Adrenal gland (tissue), 19 donors: ENCODE measurements at regions of chr11 and their contacts with region 1.

Region 1: GRCh38 chr11:65491614-65492386 is 7.0 kb upstream of the MALAT1 start:
- DNase-seq: peak; percentile 87 to 97 (median 94)
- H3K4me3 ChIP-seq: no peak overlapping the region
- H3K27ac ChIP-seq: peak overlapping the region; percentile 95 to 100 (median 99)
- H3K4me1 ChIP-seq: peaks cover 96 to 97% of the 10 kb centered on the region in 2 donors
- H3K27me3 ChIP-seq: no peaks in the 10 kb centered on the region
- CTCF ChIP-seq: no peak
- POLR2A ChIP-seq: peak; percentile 34 to 85

Region 2: GRCh38 chr11:65506770-65507505 is 15.1 kb after region 1 on chr11:
- intact Hi-C with region 1: loop called in 1 of 2 experiments (anchors 2 kb)
- DNase-seq: peak; percentile 78 to 88 (median 85)
- H3K4me3 ChIP-seq: peak overlapping the region in 1 of 4 donors; percentile 88
- H3K27ac ChIP-seq: peak overlapping the region; percentile 88 to 99 (median 97)
- H3K4me1 ChIP-seq: peaks cover 12 to 20% of the 10 kb centered on the region in 2 donors
- H3K27me3 ChIP-seq: no peaks in the 10 kb centered on the region
- CTCF ChIP-seq: no peak
- POLR2A ChIP-seq: peak; percentile 78 to 82